CD14-positive monocyte (primary cell): ENCODE measurements at regions of chr12 and their contacts with region 1.

Region 1: GRCh38 chr12:66119870-66120241 is 10.7 kb downstream of the LLPH start:
- DNase-seq: no peak
- H3K4me3 ChIP-seq: no peak overlapping the region
- H3K4me3 Mint-ChIP-seq: no peak overlapping the region
- H3K27ac ChIP-seq: no peak overlapping the region
- H3K27ac Mint-ChIP-seq: peak overlapping the region in 2 of 7 donors; percentile 2 to 51
- H3K4me1 ChIP-seq: peaks cover 8 to 15% of the 10 kb centered on the region in 2 donors
- H3K4me1 Mint-ChIP-seq: peaks cover 11% of the 10 kb centered on the region
- H3K27me3 ChIP-seq: no peaks in the 10 kb centered on the region
- H3K27me3 Mint-ChIP-seq: peaks cover 0 to 2% (median 0%) of the 10 kb centered on the region in 3 donors
- CTCF ChIP-seq: no peak

Region 2: DNA sequence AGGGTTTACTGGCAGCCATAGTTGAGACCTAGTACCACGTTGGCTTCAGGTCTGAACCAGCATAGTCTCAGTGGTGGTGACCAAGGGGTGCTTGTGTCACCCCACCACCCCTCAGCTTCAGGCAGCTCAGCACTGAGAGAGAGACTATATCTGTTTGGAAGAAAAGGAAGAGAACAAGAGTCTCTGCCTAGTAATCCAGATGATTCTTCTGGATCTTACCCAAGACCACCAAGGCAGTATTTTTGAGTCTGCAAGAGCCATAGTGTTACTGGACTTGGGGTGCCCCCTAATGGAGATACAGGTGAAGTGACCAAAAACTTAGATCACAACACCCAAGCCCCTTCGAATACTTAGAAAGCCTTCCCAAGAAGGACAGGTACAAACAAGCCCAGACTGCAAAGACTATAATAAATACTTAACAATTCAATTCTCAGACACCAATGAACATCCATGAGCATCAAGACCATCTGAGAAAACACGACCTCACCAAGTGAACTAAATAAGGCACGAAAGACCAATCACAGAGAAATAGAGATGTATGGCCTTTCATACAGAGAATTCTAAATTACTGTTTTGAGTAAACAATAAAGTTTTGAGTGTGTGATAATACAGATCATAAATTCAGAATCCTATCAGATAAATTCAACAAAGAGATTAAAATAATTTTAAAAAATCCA is 289.5 kb after region 1 on chr12:
- intact Hi-C with region 1: loop called in 1 of 2 experiments (anchors 5 kb)
- DNase-seq: peak; percentile 29 to 58 (median 51)
- H3K4me3 ChIP-seq: no peak overlapping the region
- H3K4me3 Mint-ChIP-seq: no peak overlapping the region
- H3K27ac ChIP-seq: peak overlapping the region in 1 of 2 donors; percentile 60
- H3K27ac Mint-ChIP-seq: peak overlapping the region in 6 of 7 donors; percentile 12 to 72 (median 40)
- H3K4me1 ChIP-seq: peaks cover 28 to 30% of the 10 kb centered on the region in 2 donors
- H3K4me1 Mint-ChIP-seq: peaks cover 33% of the 10 kb centered on the region
- H3K27me3 ChIP-seq: no peaks in the 10 kb centered on the region
- H3K27me3 Mint-ChIP-seq: peaks cover 0 to 3% (median 0%) of the 10 kb centered on the region in 3 donors
- CTCF ChIP-seq: peak; percentile 86

Region 3: DNA sequence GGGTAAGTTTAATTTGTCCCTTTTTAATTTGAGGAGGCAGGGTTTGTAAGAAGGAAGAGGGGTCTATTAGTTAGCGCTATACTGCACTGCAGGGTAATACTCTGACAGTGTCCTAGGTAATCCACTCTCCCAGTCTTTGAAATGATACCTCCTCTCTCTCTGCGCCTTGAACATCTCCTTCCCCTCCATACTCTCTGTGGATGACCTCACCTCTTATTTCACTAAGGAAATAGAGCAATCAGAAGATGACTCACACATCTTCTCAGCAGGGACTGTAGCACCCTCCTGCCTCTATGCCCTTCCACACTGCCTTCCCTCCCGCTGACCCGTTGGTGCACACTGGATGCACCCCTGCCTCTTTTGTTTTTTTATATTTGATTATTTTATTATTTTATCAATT is 464.8 kb after region 1 on chr12:
- intact Hi-C with region 1: no loop called
- DNase-seq: no peak
- H3K4me3 ChIP-seq: no peak overlapping the region
- H3K4me3 Mint-ChIP-seq: no peak overlapping the region
- H3K27ac ChIP-seq: no peak overlapping the region
- H3K27ac Mint-ChIP-seq: no peak overlapping the region
- H3K4me1 ChIP-seq: no peaks in the 10 kb centered on the region
- H3K4me1 Mint-ChIP-seq: no peaks in the 10 kb centered on the region
- H3K27me3 ChIP-seq: no peaks in the 10 kb centered on the region
- H3K27me3 Mint-ChIP-seq: peaks cover 0 to 1% (median 1%) of the 10 kb centered on the region in 3 donors
- CTCF ChIP-seq: no peak